Caco-2 (cell line): ENCODE measurements at regions of chr2 and their contacts with region 1.

Region 1: GRCh38 chr2:71299507-71299906 is 32.1 kb upstream of the ZNF638 start:
- DNase-seq: peak in 1 of 2 experiments; percentile 53
- H3K4me3 ChIP-seq: no peak overlapping the region
- H3K4me3 Mint-ChIP-seq: no peak overlapping the region
- H3K27ac Mint-ChIP-seq: no peak overlapping the region
- H3K4me1 ChIP-seq: no peaks in the 10 kb centered on the region
- H3K4me1 Mint-ChIP-seq: no peaks in the 10 kb centered on the region
- H3K27me3 ChIP-seq: no peaks in the 10 kb centered on the region
- H3K27me3 Mint-ChIP-seq: no peaks in the 10 kb centered on the region
- CTCF ChIP-seq: peak; percentile 68 to 75

Region 2: GRCh38 chr2:71466303-71467173 is 167.0 kb after region 1 on chr2:
- CTCF ChIA-PET with region 1: interaction called, 12 read pairs
- POLR2A ChIA-PET with region 1: no interaction called
- intact Hi-C with region 1: no loop called
- DNase-seq: peak; percentile 55 to 67
- H3K4me3 ChIP-seq: peak overlapping the region; percentile 56
- H3K4me3 Mint-ChIP-seq: peak overlapping the region; percentile 76
- H3K27ac Mint-ChIP-seq: no peak overlapping the region
- H3K4me1 ChIP-seq: no peaks in the 10 kb centered on the region
- H3K4me1 Mint-ChIP-seq: peaks cover 7% of the 10 kb centered on the region
- H3K27me3 ChIP-seq: no peaks in the 10 kb centered on the region; the same call in 1 of the 2 replicates
- H3K27me3 Mint-ChIP-seq: peaks cover 14% of the 10 kb centered on the region
- CTCF ChIP-seq: no peak